BJ (cell line): ENCODE measurements at regions of chr9 and their contacts with region 1.

Region 1: DNA sequence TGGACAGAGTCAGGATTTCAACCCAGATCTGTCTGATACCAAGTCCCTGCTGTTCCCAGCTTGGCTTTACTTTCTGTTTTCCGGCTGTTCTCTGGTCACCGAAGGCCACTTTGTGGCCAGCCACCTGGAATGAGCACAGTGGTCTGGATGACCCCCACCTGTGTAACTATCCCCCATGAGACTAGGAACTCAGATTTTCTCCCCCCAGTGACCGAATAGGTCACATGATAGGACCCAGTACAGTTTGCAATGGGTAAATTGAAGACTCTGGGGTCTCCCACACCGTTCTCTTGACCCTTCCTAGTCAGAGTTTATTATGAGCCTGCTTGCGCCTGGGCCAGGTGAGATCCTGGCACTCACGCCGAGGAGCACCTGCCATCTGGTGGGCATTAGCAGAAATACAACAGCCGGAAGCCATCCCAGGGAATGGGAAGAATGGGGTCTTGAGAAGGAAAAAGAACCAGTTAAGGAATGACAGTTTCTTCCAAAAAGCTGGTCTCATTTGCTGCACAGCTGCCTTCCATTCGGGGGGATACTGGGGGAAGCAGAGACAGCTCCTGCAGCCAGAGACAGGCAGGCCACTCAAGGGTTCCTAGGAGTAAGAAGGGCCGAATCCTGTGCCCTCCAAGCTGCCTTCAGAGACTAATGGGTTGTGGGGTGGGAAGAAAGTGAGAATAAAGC is 7.1 kb downstream of the PHYHD1 start:
- DNase-seq: no peak
- H3K4me3 ChIP-seq: no peak overlapping the region
- H3K27me3 ChIP-seq: no peaks in the 10 kb centered on the region
- CTCF ChIP-seq: peak; percentile 87

Region 2: GRCh38 chr9:128818099-128818838 is 109.6 kb before region 1 on chr9 and contains the start of gene ENDOG:
- CTCF ChIA-PET with region 1: interaction called, 10 read pairs
- POLR2A ChIA-PET with region 1: no interaction called
- DNase-seq: peak; percentile 88
- H3K4me3 ChIP-seq: peak within 1 kb of the TSS; percentile 67
- H3K27me3 ChIP-seq: no peaks in the 10 kb centered on the region
- CTCF ChIP-seq: peak; percentile 100
- polyA plus RNA-seq, gene ENDOG: 13.3 and 20.7 TPM in 2 replicates

Region 3: GRCh38 chr9:128863647-128864046 is 64.2 kb before region 1 on chr9:
- CTCF ChIA-PET with region 1: interaction called, 228 read pairs
- POLR2A ChIA-PET with region 1: no interaction called
- DNase-seq: no peak
- H3K4me3 ChIP-seq: no peak overlapping the region
- H3K27me3 ChIP-seq: no peaks in the 10 kb centered on the region
- CTCF ChIP-seq: peak; percentile 95

Region 4: DNA sequence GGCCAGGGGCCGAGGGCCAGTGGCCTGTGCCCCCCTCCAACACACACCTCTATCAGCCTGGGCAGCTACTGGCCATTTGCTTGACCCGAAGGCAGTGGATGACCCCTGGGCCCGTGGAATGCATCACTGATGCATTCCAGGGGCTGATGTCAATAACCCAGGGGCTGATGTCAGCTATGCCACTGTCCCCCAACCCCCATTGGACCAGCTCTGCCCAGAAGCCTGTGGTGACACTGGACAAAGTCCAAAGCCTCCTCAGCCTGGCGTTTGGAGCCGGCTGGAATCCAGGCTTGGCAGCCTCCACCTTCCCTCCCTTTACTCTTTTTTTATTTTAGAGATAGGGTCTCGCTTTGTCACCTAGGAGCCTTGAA is 52.1 kb before region 1 on chr9:
- CTCF ChIA-PET with region 1: interaction called, 27 read pairs
- POLR2A ChIA-PET with region 1: no interaction called
- DNase-seq: no peak
- H3K4me3 ChIP-seq: no peak overlapping the region
- H3K27me3 ChIP-seq: no peaks in the 10 kb centered on the region
- CTCF ChIP-seq: no peak

Region 5: DNA sequence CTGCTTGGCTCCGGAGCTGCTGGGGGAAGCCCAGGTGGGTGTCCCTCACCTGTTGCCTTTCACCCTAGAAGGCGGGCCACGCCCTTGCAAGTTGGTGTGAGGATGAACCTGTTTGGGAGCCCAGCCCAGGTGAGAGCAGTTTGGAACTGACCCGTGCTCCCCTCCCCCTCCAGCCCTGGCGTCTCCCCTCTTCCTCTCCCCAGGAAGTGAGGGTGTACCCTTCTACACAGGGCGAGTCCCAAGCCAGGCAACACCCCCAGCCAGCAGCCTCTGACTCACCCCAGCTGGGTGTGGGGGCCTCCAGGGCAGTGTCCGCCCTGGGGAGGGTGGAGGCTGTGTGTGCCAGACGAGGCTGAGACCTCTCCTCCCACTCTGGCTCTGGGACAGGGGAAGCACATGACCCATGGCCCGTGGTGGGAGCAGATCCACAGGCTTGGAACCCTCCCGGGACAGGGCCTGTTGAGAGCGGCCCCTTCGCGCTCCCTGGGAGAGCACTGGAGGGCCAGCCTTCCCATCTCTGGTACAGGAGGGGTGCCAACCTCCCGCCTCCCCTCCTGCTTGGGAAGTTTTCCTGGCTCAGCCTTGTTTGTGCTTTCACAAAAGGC is 35.5 kb before region 1 on chr9:
- CTCF ChIA-PET with region 1: interaction called, 11 read pairs
- POLR2A ChIA-PET with region 1: no interaction called
- DNase-seq: peak; percentile 74
- H3K4me3 ChIP-seq: peak overlapping the region; percentile 12
- H3K27me3 ChIP-seq: no peaks in the 10 kb centered on the region
- CTCF ChIP-seq: no peak

Region 6: GRCh38 chr9:128972956-128973355 is 45.1 kb after region 1 on chr9:
- CTCF ChIA-PET with region 1: no interaction called
- POLR2A ChIA-PET with region 1: no interaction called
- DNase-seq: no peak
- H3K4me3 ChIP-seq: no peak overlapping the region
- H3K27me3 ChIP-seq: no peaks in the 10 kb centered on the region
- CTCF ChIP-seq: no peak

Region 7: GRCh38 chr9:129199046-129199445 is 271.2 kb after region 1 on chr9:
- CTCF ChIA-PET with region 1: no interaction called
- POLR2A ChIA-PET with region 1: no interaction called
- DNase-seq: no peak
- H3K4me3 ChIP-seq: no peak overlapping the region
- H3K27me3 ChIP-seq: peaks cover 4% of the 10 kb centered on the region
- CTCF ChIP-seq: no peak

Region 8: GRCh38 chr9:129320575-129321263 is 392.8 kb after region 1 on chr9:
- CTCF ChIA-PET with region 1: no interaction called
- POLR2A ChIA-PET with region 1: no interaction called
- DNase-seq: peak; percentile 72
- H3K4me3 ChIP-seq: peak overlapping the region; percentile 51
- H3K27me3 ChIP-seq: no peaks in the 10 kb centered on the region
- CTCF ChIP-seq: no peak